Esophagus muscularis mucosa (tissue), 4 donors: ENCODE measurements at regions of chr2 and their contacts with region 1.

Region 1: GRCh38 chr2:177332041-177332991 is 60.3 kb upstream of the AGPS start:
- DNase-seq: no peak
- H3K4me3 ChIP-seq: peak overlapping the region; percentile 3 to 27 (median 16)
- H3K27ac ChIP-seq: peak overlapping the region; percentile 8 to 58 (median 46)
- H3K4me1 ChIP-seq: peaks cover 0 to 17% (median 14%) of the 10 kb centered on the region in 4 donors
- H3K27me3 ChIP-seq: no peaks in the 10 kb centered on the region
- CTCF ChIP-seq: peak; percentile 65 to 72 (median 66)
- EP300 ChIP-seq: no peak
- POLR2A ChIP-seq: no peak

Region 2: GRCh38 chr2:177164584-177165052 is 167.7 kb before region 1 on chr2:
- intact Hi-C with region 1: loop called (anchors 2 kb)
- DNase-seq: peak; percentile 95
- H3K4me3 ChIP-seq: peak overlapping the region; percentile 45 to 52 (median 49)
- H3K27ac ChIP-seq: peak overlapping the region; percentile 73 to 84 (median 81)
- H3K4me1 ChIP-seq: peaks cover 7 to 24% (median 18%) of the 10 kb centered on the region in 4 donors
- H3K27me3 ChIP-seq: peaks cover 0 to 5% (median 0%) of the 10 kb centered on the region in 4 donors
- CTCF ChIP-seq: peak in 2 of 3 experiments; percentile 99
- EP300 ChIP-seq: no peak
- POLR2A ChIP-seq: no peak

Region 3: GRCh38 chr2:177296040-177296439 is 36.3 kb before region 1 on chr2:
- intact Hi-C with region 1: loop called (anchors 5 kb)
- DNase-seq: no peak
- H3K4me3 ChIP-seq: no peak overlapping the region
- H3K27ac ChIP-seq: peak overlapping the region; percentile 58 to 74 (median 60)
- H3K4me1 ChIP-seq: peaks cover 10 to 15% (median 15%) of the 10 kb centered on the region in 4 donors
- H3K27me3 ChIP-seq: no peaks in the 10 kb centered on the region
- CTCF ChIP-seq: peak in 2 of 3 experiments; percentile 42 to 47
- EP300 ChIP-seq: no peak
- POLR2A ChIP-seq: no peak

Region 4: DNA sequence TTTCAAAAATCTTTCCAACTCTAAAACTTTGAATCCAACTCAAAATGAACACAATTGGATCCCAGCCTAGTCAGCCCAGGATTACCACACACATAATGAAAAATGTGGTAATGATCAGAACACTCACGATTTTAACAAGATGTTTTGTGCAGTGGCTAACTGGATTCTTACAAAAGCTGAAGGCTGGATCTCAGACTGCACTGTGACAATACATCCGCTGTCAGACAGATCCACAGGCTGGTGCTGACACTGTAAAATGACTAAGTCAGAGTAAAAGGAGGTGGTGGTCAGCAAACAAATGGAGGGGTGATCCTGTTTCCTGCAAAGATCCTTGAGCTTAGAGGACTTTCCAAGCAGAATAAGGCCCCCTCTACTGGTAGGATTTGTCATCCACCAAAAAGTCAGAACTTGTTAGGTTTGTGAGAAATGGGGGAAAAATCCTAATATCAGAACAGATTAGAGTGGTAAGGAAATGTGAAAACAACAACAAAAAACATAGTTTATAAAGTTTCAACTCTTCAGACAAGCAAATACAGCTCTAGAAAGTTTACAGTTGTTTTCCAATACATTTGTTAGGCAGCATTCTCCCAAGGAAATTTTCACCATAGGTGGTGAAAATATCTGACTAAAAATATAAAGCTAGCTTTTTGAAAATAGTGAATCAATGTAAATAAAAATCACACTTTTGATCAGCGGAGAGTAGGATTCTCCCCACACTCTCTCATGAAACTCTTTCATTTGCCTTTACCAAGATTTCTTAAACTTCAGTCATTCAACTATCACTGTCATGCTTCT is 272.2 kb after region 1 on chr2:
- intact Hi-C with region 1: loop called (anchors 5 kb)
- DNase-seq: peak; percentile 82
- H3K4me3 ChIP-seq: no peak overlapping the region
- H3K27ac ChIP-seq: no peak overlapping the region
- H3K4me1 ChIP-seq: peaks cover under 1 to 9% (median 4%) of the 10 kb centered on the region in 4 donors
- H3K27me3 ChIP-seq: no peaks in the 10 kb centered on the region
- CTCF ChIP-seq: peak; percentile 47 to 71 (median 63)
- EP300 ChIP-seq: no peak
- POLR2A ChIP-seq: no peak

Region 5: GRCh38 chr2:177758591-177759371 is 426.5 kb after region 1 on chr2:
- intact Hi-C with region 1: loop called (anchors 10 kb)
- DNase-seq: no peak
- H3K4me3 ChIP-seq: no peak overlapping the region
- H3K27ac ChIP-seq: no peak overlapping the region
- H3K4me1 ChIP-seq: peaks cover 11 to 30% (median 21%) of the 10 kb centered on the region in 4 donors
- H3K27me3 ChIP-seq: no peaks in the 10 kb centered on the region
- CTCF ChIP-seq: peak; percentile 28 to 56 (median 44)
- EP300 ChIP-seq: no peak
- POLR2A ChIP-seq: no peak